AG04450 (cell line): ENCODE measurements at regions of chr6 and their contacts with region 1.

Region 1: DNA sequence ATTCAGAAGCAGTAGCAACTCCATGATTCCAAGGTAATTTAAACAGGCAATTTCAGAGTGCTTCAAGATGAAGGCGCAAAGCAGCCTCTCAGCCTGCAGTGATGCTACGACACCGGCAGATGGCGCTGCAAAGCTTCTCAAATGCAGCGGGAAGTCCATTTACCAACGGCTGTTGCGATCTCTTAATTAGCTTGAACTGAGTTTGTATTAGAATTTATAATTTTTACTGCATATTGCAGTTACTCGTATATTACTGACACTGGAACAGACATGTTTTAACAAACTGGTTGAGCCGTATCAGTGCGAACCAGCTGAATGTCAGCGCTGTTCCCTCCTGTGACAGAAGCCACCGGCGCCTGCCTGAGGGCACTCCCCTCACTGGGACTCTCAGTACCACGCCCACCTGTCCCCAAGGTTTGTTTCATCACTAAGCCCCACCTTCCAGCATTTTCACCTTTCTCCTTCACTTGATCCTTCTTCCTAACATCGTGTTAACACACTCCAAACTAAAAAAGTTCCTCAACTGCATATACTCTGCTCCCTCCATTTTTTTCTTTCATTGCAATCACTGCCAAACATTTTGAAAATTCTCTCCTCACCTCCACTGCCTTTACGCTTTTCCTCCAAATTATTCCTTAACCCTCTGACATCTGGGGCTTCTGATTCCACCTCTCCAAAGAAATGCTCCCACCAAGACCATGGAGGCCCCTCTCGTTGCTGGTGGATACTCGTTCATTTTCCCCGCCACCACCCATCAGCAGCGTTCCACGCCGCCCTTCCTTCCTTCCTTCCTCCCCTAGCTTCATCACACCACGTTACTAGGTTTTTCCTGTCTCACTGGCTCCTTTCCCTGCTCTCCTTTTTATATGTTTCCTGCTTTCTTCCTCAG is 14.5 kb downstream of the GNL1 start:
- DNase-seq: peak; percentile 77
- H3K4me3 ChIP-seq: peak overlapping the region; percentile 34
- H3K27ac ChIP-seq: no peak overlapping the region
- H3K27me3 ChIP-seq: no peaks in the 10 kb centered on the region
- CTCF ChIP-seq: peak; percentile 98

Region 2: DNA sequence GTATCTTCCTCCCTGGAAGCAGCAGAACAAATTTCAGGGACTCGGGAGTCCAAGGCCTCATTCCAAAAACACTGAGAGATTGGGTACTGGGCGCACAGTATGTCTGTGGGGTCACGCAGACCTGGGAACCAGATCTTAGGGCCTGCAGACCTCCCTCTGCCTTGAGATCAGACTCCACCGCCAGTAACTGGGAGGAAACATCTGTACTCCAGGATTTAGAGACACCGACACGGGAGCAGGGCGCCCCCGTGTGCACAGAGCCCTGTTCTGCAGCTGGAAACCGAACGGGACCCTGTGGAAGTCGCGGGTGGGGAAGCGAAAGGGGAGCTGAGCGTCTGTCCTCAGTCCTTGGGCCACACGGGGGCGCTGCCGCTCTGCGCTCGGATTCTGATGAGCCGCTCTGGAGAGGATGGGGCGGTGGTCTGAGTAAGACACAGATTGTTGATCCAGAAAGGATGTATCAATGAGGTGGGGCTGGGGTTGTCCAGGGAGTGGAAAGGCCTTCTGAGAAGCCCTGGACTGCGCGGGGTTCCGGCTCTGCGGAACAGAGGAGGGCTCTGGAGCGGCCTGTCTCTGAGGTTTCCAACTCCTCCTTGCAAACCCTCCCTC is 88.1 kb before region 1 on chr6:
- CTCF ChIA-PET with region 1: interaction called, 14 read pairs
- POLR2A ChIA-PET with region 1: no interaction called
- DNase-seq: peak; percentile 61
- H3K4me3 ChIP-seq: no peak overlapping the region
- H3K27ac ChIP-seq: no peak overlapping the region
- H3K27me3 ChIP-seq: peaks cover 75% of the 10 kb centered on the region
- CTCF ChIP-seq: peak; percentile 84

Region 3: DNA sequence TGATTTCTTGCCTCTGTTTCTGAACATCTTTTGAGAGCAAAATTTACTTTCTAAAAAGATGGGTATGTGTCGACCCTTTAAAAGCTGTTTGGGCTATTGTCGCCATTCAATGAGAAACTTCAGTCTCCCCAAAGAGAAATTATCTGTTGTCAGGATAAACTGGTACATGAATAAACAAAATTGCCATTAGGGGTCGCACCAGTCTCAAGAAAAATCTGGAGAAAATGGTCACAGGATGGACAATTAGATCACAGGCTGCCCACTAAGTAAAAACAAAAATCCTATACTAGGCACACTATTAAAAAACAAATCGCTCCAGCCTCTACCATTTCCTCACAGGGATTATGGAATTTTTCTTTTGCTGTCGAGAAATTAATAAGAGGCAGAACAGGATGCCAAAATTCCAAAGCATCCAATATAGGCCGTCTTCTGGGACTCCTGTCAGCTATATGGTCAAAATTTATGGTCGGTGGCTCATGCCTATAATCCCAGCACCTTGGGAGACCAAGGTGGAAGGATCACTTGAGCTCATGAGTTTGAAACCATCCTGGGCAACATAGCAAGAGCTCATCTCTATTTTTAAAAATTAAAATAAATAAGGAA is 58.0 kb before region 1 on chr6:
- CTCF ChIA-PET with region 1: interaction called, 437 read pairs
- POLR2A ChIA-PET with region 1: interaction called, 3 read pairs
- DNase-seq: no peak
- H3K4me3 ChIP-seq: no peak overlapping the region
- H3K27ac ChIP-seq: no peak overlapping the region
- H3K27me3 ChIP-seq: peaks cover 34% of the 10 kb centered on the region
- CTCF ChIP-seq: peak; percentile 64

Region 4: DNA sequence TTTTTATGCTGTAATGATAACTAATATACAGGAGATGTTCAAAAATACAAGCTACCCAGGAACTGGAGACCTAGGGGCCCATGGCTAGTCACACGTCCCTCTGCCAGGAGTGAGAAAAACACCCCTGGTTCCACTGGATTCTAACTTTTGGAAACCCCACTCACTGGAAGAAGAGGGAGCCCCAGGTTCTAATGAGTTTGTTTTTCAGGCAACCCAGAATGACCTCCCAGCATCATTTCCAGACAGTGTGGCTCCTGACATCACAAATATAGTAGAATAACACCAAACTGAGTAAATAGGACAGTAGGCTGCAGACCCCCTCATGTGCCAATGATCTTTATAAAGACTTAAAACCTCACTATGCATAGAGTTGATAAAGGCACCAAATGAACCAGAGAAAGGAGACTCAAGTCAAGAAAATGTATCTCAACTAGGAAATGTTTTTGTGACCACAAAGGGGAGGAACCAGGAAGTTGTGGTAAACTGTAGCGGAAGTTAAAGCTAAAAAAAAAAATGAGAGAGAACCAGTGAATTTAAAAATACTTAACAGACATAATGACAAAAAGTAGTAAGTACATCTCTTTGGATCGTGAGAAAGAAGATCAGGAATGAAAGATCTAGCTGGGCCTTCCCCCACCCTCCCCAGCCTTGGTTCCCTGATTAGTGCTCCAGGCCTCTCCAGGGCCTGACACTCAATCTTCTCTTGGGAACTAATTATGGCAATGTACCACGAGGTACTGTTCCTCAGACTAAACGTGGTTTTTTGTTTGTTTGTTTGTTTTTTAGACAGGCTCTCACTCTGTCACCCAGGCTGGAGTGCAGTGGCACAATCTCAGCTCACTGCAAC is 32.6 kb before region 1 on chr6:
- CTCF ChIA-PET with region 1: interaction called, 20 read pairs
- POLR2A ChIA-PET with region 1: no interaction called
- DNase-seq: no peak
- H3K4me3 ChIP-seq: no peak overlapping the region
- H3K27ac ChIP-seq: no peak overlapping the region
- H3K27me3 ChIP-seq: no peaks in the 10 kb centered on the region
- CTCF ChIP-seq: no peak

Region 5: DNA sequence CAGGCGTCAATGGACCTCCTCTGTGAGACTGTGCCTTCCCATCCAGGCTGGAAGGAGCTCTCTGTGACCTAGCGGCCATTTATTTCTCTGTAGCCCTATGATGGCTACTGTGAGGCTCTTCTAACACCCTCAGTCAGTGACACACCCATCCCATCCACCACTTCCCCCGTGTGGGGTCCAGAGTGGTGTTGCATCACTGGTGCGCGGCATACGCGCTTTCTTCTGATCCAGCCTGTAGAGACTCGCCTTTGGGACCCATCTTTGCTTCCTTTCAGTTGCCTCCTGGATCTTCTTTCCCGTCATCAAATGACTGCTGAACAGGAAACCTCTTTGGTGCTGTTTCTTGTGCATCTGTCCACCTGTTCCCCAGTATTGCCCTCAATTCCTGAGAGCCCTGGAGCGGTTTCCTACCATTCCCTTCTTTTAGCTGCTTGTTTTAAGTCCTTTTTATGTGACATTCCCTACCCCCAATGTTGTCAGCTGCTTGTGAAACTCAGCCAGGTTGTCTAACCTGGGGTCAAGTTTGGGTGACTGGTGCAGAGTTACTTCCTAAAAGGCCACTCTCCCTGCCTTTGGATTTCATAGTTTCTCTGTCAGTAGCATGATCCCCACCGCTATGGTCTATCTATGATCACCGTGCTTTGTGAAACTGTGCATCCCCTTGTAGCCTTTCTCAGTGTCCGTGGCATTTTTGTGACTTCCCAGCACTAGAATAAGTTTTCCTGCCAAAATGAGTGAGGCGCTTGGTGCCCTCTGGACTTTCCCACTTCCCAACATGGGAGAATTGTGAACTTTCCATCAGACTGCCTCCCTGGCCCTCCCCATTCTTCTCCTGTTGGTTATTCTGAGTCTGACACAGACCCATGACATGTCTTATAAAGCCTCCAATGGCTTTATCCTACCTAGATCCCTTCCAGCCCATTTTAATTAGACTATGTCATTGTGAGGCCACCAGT is 21.0 kb after region 1 on chr6:
- CTCF ChIA-PET with region 1: interaction called, 101 read pairs
- POLR2A ChIA-PET with region 1: no interaction called
- DNase-seq: no peak
- H3K4me3 ChIP-seq: no peak overlapping the region
- H3K27ac ChIP-seq: no peak overlapping the region
- H3K27me3 ChIP-seq: no peaks in the 10 kb centered on the region
- CTCF ChIP-seq: no peak

Region 6: DNA sequence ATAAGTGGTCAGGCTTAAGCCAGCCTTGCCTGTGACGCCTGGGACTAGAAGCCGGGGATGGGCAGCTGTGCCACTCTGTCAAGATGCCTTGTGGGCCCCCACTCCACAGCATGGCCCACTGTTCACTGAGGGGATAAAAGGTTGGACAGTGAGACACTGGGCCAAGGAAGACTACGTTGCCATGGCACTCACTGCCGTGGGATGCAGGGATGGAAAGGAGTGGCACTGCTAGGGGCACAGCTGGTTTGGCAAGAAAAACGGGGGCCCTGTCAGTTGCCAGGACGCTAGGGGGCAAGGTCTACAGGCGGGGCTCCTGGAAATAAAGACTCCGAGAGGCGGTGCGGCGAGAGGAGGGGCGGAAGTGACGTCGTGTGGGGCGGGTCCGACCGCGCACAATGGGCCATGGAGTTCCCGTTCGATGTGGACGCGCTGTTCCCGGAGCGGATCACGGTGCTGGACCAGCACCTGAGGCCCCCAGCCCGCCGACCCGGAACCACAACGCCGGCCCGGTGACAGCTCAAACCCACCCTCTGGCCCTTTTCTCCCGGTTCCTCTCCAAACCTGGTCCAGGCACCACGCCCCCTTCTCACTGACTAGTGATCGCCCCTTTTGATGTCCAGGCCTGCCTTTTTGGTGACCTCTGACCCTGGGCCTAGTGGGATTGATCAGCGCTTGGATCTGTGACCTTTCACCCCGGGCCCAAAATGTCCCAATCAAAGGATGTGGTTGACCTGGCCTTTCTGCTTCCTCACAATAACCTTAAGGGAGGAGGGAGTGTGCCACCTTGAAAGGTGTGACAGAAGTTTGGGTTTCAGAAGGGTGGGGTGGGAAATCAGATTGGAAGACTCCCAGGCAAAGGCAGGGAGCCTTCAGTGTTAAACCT is 85.0 kb after region 1 on chr6 and contains the start of gene ATAT1:
- CTCF ChIA-PET with region 1: no interaction called
- POLR2A ChIA-PET with region 1: no interaction called
- DNase-seq: no peak
- H3K4me3 ChIP-seq: peak within 1 kb of the TSS; percentile 82
- H3K27ac ChIP-seq: peak within 1 kb of the TSS; percentile 75
- H3K27me3 ChIP-seq: no peaks in the 10 kb centered on the region
- CTCF ChIP-seq: peak; percentile 48
- polyA plus RNA-seq, gene ATAT1: 10.8 and 13.1 TPM in 2 replicates

Region 7: GRCh38 chr6:30821862-30822782 is 280.4 kb after region 1 on chr6:
- CTCF ChIA-PET with region 1: interaction called, 10 read pairs
- POLR2A ChIA-PET with region 1: no interaction called
- DNase-seq: no peak
- H3K4me3 ChIP-seq: no peak overlapping the region
- H3K27ac ChIP-seq: peak overlapping the region; percentile 21
- H3K27me3 ChIP-seq: no peaks in the 10 kb centered on the region
- CTCF ChIP-seq: peak; percentile 58

Region 8: DNA sequence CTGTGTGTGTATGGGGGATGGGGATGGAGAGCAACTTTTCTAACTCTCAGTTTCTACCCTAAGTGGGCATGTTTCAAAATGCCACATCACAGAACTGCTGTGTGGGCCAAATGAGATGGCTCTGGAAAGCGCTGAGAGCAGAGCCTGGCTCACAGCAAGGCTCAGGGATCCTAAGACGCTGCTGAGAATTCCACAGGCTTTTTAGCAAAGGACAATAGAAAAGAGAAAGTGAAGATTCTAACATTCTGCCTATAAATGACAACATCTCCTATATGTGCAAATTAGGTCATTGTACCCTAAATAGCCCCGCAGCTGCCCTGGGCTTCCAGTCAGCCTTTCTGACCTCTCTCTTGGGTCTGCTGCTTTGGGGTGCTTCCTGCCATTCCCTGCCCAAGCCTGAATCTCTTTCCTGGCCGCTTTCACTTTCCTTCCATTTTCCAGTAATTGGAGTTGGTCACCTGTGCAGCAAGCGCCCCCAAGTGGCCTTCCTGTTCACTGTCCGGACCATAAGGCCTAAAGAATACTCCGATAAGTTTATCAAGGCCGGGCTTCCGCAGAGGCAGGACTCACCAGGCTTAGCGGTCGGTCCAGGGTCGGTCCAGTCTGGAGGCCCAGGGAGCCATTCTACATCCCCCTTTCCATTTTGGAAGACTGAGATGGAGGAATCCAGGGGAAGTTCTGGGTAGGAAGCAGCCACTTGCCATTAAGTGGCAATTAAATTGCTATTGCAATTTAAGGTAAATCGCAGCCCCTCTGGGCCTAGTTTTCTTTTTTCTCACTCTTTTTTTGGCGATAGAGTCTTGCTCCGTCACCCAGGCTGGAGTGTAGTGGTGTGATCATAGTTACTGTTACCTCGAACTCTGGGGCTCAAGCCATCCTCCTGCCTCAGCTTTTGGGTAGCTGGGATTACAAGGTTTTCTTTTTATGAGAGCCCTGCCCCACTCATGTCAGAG is 335.9 kb after region 1 on chr6:
- CTCF ChIA-PET with region 1: no interaction called
- POLR2A ChIA-PET with region 1: no interaction called
- DNase-seq: peak; percentile 71
- H3K4me3 ChIP-seq: peak overlapping the region; percentile 47
- H3K27ac ChIP-seq: peak overlapping the region; percentile 34
- H3K27me3 ChIP-seq: no peaks in the 10 kb centered on the region
- CTCF ChIP-seq: peak; percentile 95